ENCODE measurements at regions of chr6 and their contacts with region 1.

Region 1: GRCh38 chr6:70706491-70707123 is 38.9 kb downstream of the SMAP1 start:
- DNase-seq: peak; percentile 19
- H3K27ac ChIP-seq: no peak overlapping the region
- CTCF ChIP-seq: peak; percentile 66

Region 2: DNA sequence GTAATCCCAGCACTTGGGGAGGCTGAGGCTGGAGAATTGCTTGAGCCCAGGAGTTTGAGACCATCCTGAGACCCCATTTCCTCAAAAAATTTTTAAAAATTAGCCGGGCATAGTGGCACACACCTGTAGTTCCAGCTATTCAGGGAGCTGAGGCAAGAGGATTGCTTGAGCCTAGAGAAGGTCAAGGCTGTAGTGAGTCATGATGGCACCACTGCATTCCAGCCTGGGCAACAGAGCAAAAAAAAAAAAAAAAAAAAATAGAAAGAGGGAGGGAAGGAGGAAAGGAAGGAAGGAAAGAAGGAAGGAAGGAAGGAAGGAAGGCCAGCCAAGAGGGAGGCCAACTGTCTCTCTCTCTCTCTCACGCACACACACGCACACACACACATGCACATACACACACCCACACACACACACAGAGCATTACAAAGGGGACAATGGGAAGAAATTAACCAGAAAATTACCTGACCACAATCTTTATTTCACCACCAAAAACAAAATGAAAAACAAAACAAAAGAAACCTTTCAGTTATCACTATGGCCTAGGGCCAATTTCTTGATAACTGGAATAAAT is 353.2 kb before region 1 on chr6:
- CTCF ChIA-PET with region 1: no interaction called
- POLR2A ChIA-PET with region 1: no interaction called
- DNase-seq: no peak
- H3K27ac ChIP-seq: no peak overlapping the region
- CTCF ChIP-seq: no peak

Region 3: DNA sequence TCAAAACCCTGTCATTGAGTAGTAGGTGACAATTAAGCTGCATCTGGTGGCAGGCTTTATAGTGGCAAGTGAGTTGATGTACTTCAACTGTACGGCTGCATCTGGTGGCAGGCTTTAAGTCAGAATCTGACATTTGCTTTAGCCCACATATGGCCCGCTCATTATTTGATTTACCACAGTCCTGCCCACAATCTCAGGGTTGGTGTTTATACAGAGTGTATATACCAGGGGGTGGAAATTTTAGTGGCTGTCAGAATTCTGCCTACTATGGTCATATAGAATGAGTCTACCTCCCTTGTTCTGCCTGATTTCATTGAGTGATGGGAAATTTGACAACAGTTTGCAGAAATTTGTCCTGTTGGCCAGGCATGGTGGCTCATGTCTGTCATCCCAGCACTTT is 73.3 kb after region 1 on chr6:
- CTCF ChIA-PET with region 1: no interaction called
- POLR2A ChIA-PET with region 1: no interaction called
- DNase-seq: no peak
- H3K27ac ChIP-seq: no peak overlapping the region
- CTCF ChIP-seq: no peak

Region 4: DNA sequence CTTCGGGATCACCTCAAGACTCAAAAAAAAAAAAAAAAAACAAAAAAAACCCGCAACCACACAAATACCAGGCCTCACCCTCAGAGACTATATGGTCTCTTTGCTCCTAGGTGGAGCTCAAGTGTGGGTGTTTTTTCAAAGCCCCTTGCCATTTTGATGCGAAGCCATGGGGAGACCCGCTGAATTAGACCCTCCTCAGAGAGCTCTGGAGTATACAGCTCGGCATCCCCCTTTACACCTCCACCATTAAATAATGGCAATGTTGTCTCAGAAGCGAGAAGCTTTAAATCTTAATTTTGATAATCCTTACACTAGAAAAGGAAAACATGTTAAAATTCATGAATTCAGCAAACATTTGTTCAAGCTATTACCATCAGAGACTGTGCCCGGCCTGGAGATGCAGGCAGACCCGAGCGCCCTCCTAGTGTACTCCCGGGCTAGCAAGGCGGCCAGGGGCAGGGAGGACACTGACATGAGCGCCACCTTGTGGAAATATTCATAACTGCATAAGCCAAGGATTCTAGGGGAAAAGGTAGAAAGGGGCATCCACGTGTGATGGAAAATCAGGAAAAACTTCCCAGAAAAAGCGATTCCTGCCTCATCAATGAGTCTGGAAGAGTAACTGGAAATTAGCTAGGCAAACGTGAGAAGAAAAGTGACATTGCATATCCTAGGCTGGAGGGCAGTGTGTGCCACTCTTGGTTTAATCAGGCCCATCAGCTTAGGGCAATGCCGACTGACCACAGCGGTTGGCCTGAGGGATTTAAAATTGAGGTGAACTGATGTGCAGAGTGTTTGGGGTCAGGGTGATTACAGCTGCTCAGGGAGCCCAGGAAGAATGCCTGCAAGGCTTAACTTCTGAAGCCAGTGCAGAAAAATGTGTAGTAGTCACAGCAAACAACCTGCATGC is 177.7 kb after region 1 on chr6:
- CTCF ChIA-PET with region 1: interaction called, 23 read pairs
- POLR2A ChIA-PET with region 1: no interaction called
- DNase-seq: peak; percentile 63
- H3K27ac ChIP-seq: no peak overlapping the region
- CTCF ChIP-seq: peak; percentile 90

Region 5: DNA sequence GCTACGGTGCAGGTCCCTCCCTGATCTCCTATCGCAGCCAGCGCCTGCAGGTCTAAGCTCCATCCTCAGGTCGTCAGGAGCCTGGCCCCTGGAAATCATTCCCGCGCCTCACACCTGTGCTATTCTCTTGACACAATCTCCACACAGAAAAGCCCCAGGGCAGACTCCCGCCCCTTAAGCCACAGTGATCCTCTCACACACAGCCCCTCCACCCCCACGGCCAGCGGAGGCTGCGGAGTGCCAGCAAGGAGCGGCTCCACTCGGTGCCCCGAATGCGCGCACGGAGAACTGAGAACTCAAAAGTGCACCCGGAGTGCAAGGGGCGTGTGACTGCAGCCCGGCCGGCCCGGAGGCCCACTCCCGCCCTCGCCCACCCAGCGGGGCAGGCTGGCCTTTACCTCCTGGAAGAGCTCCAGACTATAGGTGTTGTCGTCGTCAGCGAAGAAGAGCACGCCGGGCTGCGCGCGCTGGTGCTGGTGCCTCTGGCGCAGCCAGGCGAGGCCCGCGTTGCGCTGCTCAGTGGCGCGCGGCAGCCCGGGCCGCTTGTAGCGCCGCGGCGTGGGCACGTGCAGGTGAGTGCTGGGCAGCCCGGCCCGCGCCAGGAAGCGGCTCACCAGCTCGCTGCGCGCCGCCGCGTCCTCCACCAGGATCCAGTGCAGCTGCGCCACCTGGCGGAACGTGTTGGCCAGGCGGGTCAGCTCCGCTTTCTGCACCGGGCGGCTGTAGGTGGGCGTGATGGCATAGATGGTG is 249.0 kb after region 1 on chr6:
- CTCF ChIA-PET with region 1: interaction called, 15 read pairs
- POLR2A ChIA-PET with region 1: no interaction called
- DNase-seq: peak; percentile 63
- H3K27ac ChIP-seq: no peak overlapping the region
- CTCF ChIP-seq: peak; percentile 93

Measured in RWPE1 (cell line).